GM10248 (cell line): ENCODE measurements at regions of chr10 and their contacts with region 1.

Region 1: DNA sequence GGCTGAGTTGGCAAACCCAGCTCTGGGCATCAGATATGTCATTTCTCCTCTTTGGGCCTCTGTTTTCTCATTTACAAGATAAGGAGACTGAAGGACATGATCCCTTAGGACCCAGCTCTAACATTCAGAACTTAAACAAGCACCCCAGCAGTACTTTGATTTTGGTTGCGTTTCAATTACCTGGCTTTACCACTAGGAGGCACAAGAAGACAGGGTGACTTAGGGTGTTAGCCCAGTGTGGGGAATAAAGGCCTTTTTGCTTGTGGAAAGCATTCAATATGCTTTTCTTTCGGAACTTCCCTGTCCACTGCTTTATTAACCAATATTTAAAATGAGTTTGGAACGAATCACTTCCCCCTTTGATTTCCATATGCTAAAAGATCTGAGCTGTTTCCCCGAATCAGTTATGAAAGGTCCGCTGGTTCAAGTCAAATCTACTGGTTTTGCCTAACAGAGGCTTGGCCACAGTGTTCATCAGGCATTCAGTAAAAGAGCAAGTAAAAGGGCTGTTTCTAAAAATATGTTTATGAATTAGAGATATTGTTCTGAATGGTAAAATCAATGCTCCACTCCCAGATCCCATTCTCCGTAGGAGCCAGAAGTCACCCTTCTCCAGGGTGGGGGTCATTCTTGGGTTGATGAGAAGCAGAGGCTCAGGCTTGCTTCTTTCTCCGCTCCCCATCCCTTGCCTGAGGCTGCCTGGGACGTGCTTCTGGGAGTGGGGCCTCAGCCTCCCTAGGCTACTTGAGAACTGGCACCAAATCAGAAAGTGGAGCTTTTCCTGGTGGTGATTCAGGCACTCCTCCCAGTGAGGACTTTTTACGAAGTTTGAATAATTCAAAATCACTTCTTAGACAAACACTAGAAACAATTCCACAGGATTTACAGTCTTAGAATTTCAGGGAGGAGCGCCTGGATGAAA is 105.5 kb downstream of the MYOF start:
- DNase-seq: peak; percentile 65
- CTCF ChIP-seq: peak; percentile 89

Region 2: DNA sequence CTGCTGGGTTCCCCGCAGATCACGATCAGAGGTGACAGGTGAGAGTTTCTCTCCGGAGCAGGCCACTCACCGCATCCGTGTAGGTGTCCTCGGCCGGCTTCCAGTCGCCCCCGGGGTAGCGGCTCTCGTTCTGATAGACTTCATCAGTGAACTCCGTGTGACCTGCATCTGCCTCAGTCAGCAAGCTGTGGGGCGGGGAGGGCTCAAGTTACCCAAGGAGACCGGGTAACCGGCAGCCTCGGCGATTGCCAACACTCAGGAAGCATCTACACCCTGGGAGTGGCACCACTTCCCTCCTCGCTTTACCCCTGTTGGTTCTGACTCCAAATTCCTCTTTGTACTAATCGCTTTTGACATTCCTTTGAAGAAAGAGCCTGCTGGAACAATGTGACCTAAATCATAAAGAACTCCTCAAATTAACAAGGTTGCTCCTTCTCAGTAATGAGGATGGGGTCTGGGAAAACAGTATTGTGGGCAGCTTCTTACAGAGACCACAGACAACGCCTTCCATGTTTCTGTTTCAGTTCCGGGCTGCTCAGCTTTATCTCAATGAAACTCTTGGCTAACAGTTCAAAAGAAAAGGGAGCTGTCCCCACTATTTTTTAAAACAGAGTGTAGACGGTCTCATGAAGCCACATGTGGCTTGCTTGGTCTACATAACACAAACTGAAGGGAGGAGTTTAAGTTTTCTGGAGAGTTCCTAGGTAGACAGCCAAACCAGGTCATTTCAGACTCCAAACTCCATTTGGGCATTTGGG is 12.6 kb before region 1 on chr10:
- CTCF ChIA-PET with region 1: interaction called, 26 read pairs
- POLR2A ChIA-PET with region 1: no interaction called
- DNase-seq: no peak
- CTCF ChIP-seq: no peak

Region 3: DNA sequence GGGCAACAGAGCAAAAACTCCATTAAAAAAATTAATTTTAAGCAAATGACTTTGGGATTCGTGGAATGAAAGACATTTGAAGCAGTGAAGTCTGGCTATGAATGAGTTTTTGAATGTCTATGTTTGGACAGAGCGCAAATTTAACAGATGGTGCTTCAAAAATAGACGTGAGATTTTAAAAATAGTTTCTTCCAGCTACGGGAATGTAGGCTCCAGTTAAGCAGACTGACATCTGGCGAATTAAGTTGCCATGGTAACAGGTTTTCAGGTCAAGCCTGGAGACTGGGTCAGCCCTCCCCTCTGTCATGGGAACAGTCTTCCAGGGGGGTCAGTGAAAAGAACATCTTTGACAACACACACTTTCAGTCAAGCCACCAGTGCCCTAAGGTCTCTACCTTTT is 43.5 kb after region 1 on chr10:
- CTCF ChIA-PET with region 1: interaction called, 10 read pairs
- POLR2A ChIA-PET with region 1: no interaction called
- DNase-seq: no peak
- CTCF ChIP-seq: no peak

Region 4: DNA sequence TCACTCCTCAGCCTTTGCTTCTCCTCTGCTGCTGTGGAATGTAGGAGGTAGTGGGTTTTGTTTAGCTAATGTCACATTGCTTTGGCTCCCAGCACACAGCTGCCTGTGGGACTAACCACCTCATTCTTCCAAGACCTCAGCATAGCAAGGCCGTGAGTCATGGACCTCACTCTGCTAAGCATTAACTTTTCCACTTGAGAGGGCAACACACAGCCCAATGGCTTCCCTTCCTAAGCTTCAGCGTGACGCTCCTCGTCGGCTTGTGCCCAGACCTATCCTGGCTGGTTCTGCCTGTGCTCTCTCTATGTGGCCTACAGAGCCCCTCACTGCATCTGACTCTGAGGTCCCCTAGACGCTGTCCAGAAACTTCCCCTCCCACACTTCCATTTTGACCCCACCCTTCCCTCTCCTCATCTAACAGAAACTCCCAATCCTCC is 82.2 kb after region 1 on chr10:
- CTCF ChIA-PET with region 1: interaction called, 14 read pairs
- POLR2A ChIA-PET with region 1: no interaction called
- DNase-seq: no peak
- CTCF ChIP-seq: no peak

Region 5: DNA sequence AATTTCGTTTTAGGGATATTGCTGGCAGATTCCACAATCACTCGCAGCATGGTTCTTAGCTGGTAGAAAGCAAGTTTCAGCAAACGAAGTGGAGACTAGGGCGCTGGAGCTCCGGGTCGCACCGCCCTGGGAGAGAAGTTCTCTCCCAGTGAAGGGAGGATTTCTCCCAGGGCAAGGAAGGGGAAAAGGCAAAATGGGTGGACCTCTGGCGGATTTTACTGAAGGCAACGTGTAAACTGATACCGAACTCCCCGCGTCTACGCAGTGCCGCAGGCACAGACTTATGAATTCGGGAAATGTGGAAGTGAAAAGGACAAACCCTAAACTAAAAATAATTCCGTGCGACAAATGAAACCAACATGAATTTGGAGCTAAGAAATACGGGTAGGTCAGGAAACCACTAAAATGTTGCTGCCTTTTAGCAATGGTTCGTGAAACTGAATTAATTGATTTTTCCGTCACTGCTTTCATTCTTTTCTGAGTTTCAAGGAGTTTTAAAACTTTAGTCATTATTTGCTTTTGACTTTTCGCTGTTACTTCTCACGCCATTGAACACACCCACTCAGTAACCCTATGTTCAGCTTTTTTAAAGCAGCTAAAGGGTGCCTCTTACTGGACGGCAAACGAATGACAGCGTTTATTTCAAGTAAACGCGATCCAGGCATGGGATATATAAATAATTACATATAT is 105.7 kb after region 1 on chr10 and contains the start of gene MYOF:
- CTCF ChIA-PET with region 1: interaction called, 254 read pairs
- POLR2A ChIA-PET with region 1: no interaction called
- DNase-seq: peak; percentile 70
- CTCF ChIP-seq: peak; percentile 63

Region 6: GRCh38 chr10:93503075-93503474 is 126.4 kb after region 1 on chr10:
- CTCF ChIA-PET with region 1: interaction called, 150 read pairs
- POLR2A ChIA-PET with region 1: no interaction called
- DNase-seq: peak; percentile 25
- CTCF ChIP-seq: no peak

Region 7: DNA sequence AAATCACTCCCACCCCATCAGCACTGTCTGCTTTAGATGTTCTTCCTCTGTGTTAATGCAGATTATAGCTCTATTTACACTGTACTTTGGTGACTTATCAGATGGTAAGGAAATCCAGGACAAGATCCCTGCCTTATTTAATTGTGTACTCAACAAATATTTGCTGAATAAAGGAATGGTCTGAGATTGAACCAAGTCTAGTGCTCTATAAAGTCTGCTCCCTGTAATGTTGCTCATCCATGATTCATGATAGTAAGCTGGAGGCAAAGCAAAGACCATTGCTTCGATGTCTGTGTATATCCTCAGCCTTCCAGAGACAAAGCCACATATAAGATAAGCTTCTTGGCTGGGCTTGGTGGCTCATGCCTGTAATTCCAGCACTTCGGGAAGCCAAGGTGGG is 650.6 kb after region 1 on chr10:
- CTCF ChIA-PET with region 1: no interaction called
- POLR2A ChIA-PET with region 1: no interaction called
- DNase-seq: no peak
- CTCF ChIP-seq: no peak